AG04449 (cell line): ENCODE measurements at regions of chr16 and their contacts with region 1.

Region 1: DNA sequence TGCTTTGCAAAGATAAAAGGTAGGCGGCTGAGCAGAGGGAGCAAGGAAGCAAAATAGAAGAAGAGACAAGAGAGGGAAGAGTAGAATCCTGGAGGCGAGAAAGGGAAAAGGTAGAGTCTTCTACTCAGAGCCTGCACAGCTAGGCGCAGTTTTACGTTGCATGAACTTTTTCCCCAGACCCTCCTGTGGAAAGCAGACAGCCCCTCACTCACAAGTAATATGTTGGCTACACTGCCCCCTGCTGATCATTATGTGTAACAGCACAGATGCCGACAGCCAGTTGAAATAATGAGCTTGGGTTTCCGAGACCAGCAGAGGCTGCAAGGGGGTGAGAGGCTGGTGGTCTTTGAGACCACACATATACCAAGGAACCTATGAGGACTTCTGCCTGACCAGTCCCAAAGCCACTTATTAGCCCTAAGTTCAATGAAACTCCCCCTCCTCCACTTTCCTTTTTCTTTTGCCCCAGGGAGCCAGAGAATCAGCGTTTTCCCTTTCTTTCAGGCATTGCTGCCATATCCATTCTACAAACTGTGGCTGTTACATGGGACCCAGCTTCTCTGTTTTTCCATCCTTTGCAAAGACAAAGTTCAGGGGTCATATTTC is 22.5 kb upstream of the CMTR2 start:
- DNase-seq: no peak
- H3K4me3 ChIP-seq: no peak overlapping the region
- CTCF ChIP-seq: peak; percentile 71

Region 2: DNA sequence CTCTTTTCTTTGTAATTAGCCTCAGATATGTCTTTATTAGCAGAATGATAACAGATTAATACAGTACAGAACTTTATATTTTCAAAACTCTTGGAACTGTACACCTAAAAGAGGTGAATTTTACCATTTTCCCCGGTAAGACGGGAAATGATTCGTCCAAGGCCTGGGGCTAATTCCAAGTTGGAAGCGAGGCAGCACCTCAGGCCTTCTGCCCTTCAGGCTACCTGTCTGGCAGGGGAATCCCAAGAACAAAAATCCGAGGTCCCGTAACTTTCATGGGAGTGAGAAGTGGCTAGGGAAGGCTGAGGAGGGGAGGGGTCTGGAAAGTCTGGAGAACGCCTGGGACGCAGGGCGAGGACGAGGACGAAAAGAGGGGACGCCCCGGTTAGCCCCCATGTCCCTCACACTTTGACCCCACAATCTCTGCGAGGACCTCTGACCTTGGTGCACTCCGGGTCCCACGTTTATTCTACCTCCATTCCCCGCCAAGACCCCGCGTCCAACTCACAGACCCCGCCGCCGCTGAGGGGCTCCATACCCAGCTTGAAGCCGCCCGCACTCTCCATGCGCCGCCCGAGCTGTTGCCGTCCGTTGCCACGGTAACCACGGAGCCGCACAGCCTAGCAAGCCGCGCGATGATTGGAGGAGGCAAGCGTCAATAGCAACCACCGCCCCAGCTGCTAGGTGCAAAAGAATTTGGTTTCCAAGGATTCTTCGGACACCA is 81.4 kb before region 1 on chr16 and contains the start of gene HYDIN:
- CTCF ChIA-PET with region 1: no interaction called
- POLR2A ChIA-PET with region 1: no interaction called
- DNase-seq: no peak
- H3K4me3 ChIP-seq: peak within 1 kb of the TSS; percentile 18; the same call in 1 of the 2 replicates
- CTCF ChIP-seq: no peak

Region 3: GRCh38 chr16:71297341-71297634 is 14.4 kb before region 1 on chr16:
- CTCF ChIA-PET with region 1: interaction called, 29 read pairs
- POLR2A ChIA-PET with region 1: no interaction called
- DNase-seq: no peak
- H3K4me3 ChIP-seq: no peak overlapping the region
- CTCF ChIP-seq: no peak

Region 4: GRCh38 chr16:71327720-71328119 is 16.1 kb after region 1 on chr16:
- CTCF ChIA-PET with region 1: interaction called, 10 read pairs
- POLR2A ChIA-PET with region 1: no interaction called
- DNase-seq: no peak
- H3K4me3 ChIP-seq: no peak overlapping the region
- CTCF ChIP-seq: no peak

Region 5: GRCh38 chr16:71358464-71358998 is 46.9 kb after region 1 on chr16 and contains the start of gene CALB2:
- CTCF ChIA-PET with region 1: no interaction called
- POLR2A ChIA-PET with region 1: no interaction called
- DNase-seq: no peak
- H3K4me3 ChIP-seq: peak within 1 kb of the TSS; percentile 44
- CTCF ChIP-seq: peak; percentile 82